ENCODE measurements at regions of chr10 and their contacts with region 1.

Region 1: DNA sequence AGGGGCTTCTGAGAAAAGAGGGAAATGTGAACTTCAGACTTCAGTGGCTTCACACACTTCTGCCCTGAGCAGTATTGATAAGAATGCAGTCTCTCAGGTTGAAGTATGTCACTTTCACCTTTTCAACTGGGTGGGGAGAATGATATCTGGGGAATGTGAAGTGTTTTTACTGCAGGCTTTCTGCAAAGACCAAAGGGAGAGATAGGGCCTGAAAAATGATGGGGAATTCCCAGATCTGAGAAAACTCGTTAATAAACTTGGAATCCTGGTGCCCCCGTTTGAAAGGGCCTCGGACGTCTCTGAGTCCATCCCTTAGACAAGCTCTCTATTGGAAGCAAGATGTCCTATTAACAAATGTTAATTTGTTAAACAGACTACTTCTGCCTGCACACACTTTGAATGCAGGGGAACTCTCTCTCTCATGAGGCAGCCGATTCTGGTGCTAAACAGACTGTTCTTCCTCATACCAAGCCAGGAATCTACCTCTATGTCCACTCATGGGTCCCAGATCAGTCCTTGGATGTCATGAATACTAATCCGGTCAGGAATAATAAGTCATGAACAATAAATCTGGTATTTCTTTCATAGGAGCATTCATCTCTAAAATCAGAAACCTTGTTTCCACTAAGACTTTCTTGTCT is 193.6 kb downstream of the JCAD start:
- DNase-seq: peak; percentile 56 to 94
- H3K4me3 ChIP-seq: no peak overlapping the region
- H3K27ac ChIP-seq: peak overlapping the region; percentile 98
- H3K4me1 ChIP-seq: peaks cover 62% of the 10 kb centered on the region
- H3K27me3 ChIP-seq: no peaks in the 10 kb centered on the region
- CTCF ChIP-seq: no peak

Region 2: GRCh38 chr10:29635711-29636144 is 230.1 kb before region 1 on chr10:
- CTCF ChIA-PET with region 1: no interaction called
- POLR2A ChIA-PET with region 1: interaction called, 20 read pairs
- intact Hi-C with region 1: no loop called
- DNase-seq: no peak
- H3K4me3 ChIP-seq: no peak overlapping the region
- H3K27ac ChIP-seq: peak overlapping the region; percentile 35; the same call in 1 of the 2 replicates
- H3K4me1 ChIP-seq: peaks cover 62% of the 10 kb centered on the region
- H3K27me3 ChIP-seq: no peaks in the 10 kb centered on the region
- CTCF ChIP-seq: no peak

Region 3: GRCh38 chr10:29886299-29886698 is 20.5 kb after region 1 on chr10:
- CTCF ChIA-PET with region 1: interaction called, 14 read pairs
- POLR2A ChIA-PET with region 1: interaction called, 3 read pairs
- intact Hi-C with region 1: no loop called
- DNase-seq: no peak
- H3K4me3 ChIP-seq: no peak overlapping the region
- H3K27ac ChIP-seq: no peak overlapping the region
- H3K4me1 ChIP-seq: no peaks in the 10 kb centered on the region
- H3K27me3 ChIP-seq: no peaks in the 10 kb centered on the region
- CTCF ChIP-seq: no peak

Region 4: GRCh38 chr10:29957907-29958356 is 92.1 kb after region 1 on chr10:
- CTCF ChIA-PET with region 1: no interaction called
- POLR2A ChIA-PET with region 1: no interaction called
- intact Hi-C with region 1: loop called (anchors 1 kb)
- DNase-seq: peak; percentile 94 to 97
- H3K4me3 ChIP-seq: no peak overlapping the region
- H3K27ac ChIP-seq: peak overlapping the region; percentile 88
- H3K4me1 ChIP-seq: peaks cover 44% of the 10 kb centered on the region
- H3K27me3 ChIP-seq: no peaks in the 10 kb centered on the region
- CTCF ChIP-seq: no peak

Region 5: DNA sequence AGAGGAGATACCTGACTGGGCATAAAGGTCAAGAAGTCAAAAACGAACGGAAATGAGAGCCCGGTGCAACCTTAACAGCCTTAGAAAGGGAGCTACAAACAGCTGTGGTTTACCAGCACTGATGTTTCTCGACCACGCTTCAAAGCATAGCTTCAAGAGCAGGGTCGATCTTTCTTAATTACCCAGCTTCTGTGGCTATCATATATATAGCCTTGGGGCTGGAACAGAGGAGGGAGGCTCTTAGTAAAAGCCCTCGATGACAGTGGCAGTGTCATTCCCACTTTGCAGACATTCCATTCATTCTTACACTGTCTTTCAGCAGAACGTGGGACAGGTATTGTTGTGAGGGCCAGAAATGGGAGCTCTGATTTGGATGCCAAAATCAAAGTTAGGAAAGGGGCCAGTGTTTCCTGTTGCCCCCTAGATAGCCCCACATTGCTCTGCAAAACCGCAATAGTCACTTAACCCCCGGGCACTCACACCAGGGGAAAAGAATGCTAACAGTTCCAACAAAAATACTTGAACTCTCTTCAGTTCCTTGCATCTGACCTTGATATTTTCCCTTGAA is 341.7 kb after region 1 on chr10:
- CTCF ChIA-PET with region 1: no interaction called
- POLR2A ChIA-PET with region 1: no interaction called
- intact Hi-C with region 1: no loop called
- DNase-seq: peak; percentile 67 to 83
- H3K4me3 ChIP-seq: no peak overlapping the region
- H3K27ac ChIP-seq: peak overlapping the region; percentile 18; the same call in 1 of the 2 replicates
- H3K4me1 ChIP-seq: peaks cover 18% of the 10 kb centered on the region
- H3K27me3 ChIP-seq: no peaks in the 10 kb centered on the region
- CTCF ChIP-seq: no peak